Activated CD4-positive, alpha-beta memory T cell treated with anti-CD3 and anti-CD28 coated beads, Interleukin-2, amount 10 ng/mL, durations not matched to agents 7 days and 5 days (primary cell): ENCODE measurements at regions of chr2 and their contacts with region 1.

Region 1: DNA sequence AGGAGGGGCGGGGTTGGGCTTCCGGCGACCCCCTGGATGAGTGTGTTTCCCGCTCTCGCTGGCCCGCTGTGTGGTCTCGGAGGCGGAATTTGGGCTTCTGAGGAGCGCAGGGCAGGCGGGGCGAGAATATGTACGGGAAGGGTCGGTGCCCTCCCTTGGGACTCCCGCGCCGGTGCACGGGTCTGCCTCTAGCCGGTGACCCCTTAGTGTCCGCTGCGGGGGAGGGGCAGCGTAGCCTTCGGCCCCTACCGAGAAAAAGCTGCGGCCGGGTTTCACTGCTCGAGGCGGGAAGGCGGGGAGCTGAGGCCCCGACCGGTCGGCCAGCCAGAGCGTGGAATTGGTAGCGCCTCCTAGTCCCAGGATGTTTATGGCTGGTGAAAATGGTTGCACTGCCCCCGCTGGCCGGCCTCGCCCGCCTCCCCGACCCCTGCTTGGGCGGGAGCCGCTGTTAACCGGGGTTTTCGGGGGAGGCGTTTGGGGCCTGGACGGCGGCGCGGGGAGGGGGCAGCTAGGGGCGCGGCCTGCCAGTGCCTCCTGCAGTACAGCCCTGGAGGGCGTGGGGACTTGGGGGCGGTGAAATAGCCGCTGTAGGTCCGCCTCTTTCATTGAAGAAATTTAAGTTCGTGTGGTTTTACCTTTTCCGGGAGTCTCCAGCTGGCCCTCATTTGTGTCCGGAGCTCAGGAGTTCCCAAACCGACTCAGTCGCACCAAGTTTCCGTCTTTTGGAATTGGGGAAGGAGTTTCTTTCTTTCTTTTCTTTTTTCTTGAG is at the start of gene UGP2:
- DNase-seq: peak; percentile 92
- H3K4me3 Mint-ChIP-seq: peak within 1 kb of the TSS; percentile 99
- H3K27ac Mint-ChIP-seq: peak within 1 kb of the TSS; percentile 95
- H3K4me1 Mint-ChIP-seq: peaks cover 51% of the 10 kb centered on the region
- H3K27me3 Mint-ChIP-seq: no peaks in the 10 kb centered on the region
- total RNA-seq, gene UGP2: 180 TPM

Region 2: DNA sequence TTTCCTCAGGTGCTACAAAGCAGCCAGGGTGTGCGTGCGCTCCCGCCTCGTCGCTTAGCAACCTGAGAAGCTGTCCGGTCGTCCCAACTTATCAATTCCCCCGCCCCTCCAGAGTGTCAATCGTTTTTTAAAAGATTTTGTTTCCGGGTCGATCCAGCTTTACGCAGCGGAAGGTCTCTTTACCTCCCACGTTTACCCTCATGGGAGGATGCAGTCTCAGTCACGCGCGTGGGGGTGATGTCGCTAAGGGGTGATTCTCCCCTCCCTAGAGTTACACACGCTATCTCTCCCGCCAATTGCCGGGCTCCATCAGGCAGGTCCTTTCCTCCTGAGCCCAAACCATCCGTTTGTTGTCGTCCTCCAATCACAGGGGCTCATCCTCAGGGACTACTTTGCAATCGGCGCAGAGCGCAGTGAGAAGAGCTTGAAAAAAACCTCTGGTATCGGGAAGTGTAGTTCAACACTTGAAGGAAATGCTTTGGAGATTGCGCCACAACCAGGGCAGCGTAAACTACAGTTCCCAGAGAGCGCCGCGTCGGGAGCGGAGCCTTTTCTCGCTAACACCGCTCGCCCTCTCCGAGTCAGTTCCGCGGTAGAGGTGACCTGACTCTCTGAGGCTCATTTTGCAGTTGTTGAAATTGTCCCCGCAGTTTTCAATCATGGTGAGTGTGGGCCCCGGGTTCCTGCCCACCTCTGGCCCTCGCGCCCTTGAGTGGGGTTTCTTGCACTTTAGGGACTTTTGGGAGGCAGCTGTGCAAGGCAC is 252.9 kb before region 1 on chr2 and contains the starts of genes MDH1 and WDPCP:
- CTCF ChIA-PET with region 1: no interaction called
- POLR2A ChIA-PET with region 1: interaction called, 100 read pairs
- DNase-seq: peak; percentile 95
- H3K4me3 Mint-ChIP-seq: peak within 1 kb of the TSS; percentile 88
- H3K27ac Mint-ChIP-seq: peak within 1 kb of the TSS; percentile 95
- H3K4me1 Mint-ChIP-seq: peaks cover 35% of the 10 kb centered on the region
- H3K27me3 Mint-ChIP-seq: no peaks in the 10 kb centered on the region
- total RNA-seq, gene MDH1: 190 to 192 TPM
- total RNA-seq, gene WDPCP: 4.9 to 6.3 TPM

Region 3: GRCh38 chr2:63819765-63820717 is 21.4 kb before region 1 on chr2:
- CTCF ChIA-PET with region 1: no interaction called
- POLR2A ChIA-PET with region 1: interaction called, 11 read pairs
- DNase-seq: no peak
- H3K4me3 Mint-ChIP-seq: no peak overlapping the region
- H3K27ac Mint-ChIP-seq: no peak overlapping the region
- H3K4me1 Mint-ChIP-seq: no peaks in the 10 kb centered on the region
- H3K27me3 Mint-ChIP-seq: peaks cover 7% of the 10 kb centered on the region

Region 4: DNA sequence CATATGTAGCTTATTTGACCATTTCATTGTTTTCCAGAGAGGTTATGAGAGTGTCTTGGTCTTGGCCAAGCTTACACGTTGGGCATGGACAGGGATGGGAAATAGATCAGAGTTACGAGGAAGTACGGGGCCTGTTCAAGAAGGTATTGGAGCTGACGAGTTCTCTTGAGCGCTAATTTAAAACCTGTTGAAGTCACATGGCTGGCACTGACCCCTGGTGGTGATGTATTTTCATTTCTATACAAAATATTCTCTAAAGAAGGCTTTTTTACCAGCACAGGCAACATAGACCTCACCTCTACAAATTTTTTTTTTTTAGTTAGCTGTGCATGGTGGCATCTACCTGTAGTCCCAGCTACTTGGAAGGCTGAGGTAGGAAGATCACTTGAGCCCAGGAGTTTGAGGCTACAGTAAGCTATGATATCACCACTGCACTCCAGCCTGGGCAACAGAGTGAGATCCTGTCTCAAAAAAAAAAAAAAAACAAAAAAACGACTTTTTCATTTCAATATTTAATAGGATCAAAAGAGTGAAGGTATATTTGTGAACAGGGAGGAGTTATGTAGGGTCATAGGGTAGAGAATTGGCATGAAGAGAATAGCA is 19.9 kb after region 1 on chr2:
- CTCF ChIA-PET with region 1: interaction called, 167 read pairs
- POLR2A ChIA-PET with region 1: interaction called, 738 read pairs
- DNase-seq: peak; percentile 55
- H3K4me3 Mint-ChIP-seq: no peak overlapping the region
- H3K27ac Mint-ChIP-seq: no peak overlapping the region
- H3K4me1 Mint-ChIP-seq: peaks cover 58% of the 10 kb centered on the region
- H3K27me3 Mint-ChIP-seq: no peaks in the 10 kb centered on the region

Region 5: DNA sequence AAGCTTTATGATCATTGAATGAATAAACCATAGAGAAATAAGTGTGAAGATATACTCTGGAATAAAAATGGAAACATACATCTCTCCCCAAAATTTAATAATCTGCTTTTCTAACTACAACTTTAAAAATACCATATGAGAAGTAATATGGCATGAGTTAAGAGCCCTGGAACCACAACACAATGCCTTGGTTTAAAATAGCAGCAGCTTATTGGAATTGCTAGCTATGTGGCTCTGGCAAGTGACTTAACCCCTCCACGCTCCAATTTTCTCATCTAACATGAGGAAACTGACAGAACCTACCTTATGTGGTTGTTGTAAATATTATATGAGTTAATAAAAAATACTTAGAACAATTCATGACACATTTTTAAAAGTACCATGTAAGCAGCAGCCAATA is 101.3 kb after region 1 on chr2:
- CTCF ChIA-PET with region 1: no interaction called
- POLR2A ChIA-PET with region 1: no interaction called
- DNase-seq: no peak
- H3K4me3 Mint-ChIP-seq: no peak overlapping the region
- H3K27ac Mint-ChIP-seq: no peak overlapping the region
- H3K4me1 Mint-ChIP-seq: no peaks in the 10 kb centered on the region
- H3K27me3 Mint-ChIP-seq: no peaks in the 10 kb centered on the region

Region 6: DNA sequence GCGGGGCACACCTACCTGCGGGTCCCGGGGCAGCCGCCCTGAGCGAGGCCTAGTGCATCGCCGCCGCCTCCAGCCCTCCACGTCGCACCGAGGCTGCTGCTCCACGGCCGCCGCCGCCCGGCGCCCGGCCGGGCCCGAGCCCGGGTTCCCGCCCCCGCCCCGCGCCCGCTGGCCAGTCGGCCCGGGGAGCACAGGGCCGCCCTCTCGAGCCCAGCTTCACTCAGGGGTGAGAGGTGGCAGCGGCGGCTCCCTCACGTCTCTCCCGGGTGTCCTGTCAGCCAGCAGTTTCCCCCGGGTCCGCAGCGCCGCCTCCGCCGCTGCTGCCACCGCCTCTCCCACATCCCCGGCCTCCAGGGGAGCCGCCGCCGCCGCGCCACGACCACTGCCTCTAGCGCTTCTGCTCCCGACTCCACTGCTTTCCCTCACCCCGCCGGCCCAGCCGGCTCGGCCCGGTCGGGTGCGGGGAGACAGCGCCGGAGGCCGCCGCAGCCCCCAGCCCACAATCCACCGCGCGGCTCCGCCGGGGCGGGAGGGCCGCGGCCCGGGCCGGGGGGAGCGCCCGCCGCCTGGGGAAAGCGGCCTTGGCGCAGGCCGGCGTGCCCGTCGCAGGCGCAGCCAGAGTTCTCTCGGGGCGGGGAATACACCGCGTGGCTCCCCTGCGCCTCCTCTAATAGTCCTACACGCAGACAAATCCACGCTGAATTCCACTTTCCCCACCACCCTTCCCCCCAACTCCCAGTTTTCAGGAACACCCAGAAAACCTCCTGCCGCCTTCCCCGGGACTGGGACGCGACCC is 177.7 kb after region 1 on chr2 and contains the start of gene VPS54:
- CTCF ChIA-PET with region 1: interaction called, 4 read pairs
- POLR2A ChIA-PET with region 1: interaction called, 22 read pairs
- DNase-seq: peak; percentile 65
- H3K4me3 Mint-ChIP-seq: peak within 1 kb of the TSS; percentile 98
- H3K27ac Mint-ChIP-seq: peak within 1 kb of the TSS; percentile 96
- H3K4me1 Mint-ChIP-seq: peaks cover 42% of the 10 kb centered on the region
- H3K27me3 Mint-ChIP-seq: no peaks in the 10 kb centered on the region
- total RNA-seq, gene VPS54: 18.8 to 19.2 TPM